ENCODE measurements at regions of chr5 and their contacts with region 1.

Region 1: DNA sequence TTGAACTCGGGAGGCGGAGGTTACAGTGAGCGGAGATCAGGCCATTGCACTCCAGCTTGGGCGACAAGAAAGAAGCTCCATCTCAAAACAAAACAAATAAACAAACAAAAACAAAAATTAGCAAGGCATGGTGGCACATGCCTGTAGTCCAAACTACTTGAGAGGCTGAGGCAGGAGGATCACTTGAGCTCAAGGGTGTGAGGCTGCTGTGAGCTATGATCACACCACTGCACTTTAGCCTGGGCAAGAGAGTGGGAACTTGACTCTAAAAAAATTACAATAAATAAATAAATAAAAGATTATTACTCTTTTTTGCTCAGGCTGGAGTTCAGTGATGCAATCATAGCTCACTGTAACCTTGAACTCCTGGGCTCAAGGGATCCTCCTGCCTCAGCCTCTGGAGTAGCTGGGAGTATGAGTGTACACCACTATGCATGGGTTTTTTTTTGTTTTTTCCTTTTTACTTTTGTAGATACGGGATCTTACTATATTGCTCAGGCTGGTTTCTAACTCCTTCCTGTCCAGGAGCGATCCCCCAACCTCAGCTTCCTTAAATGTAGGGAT is 9.0 kb upstream of the DCP2 start:
- DNase-seq: no peak

Region 2: DNA sequence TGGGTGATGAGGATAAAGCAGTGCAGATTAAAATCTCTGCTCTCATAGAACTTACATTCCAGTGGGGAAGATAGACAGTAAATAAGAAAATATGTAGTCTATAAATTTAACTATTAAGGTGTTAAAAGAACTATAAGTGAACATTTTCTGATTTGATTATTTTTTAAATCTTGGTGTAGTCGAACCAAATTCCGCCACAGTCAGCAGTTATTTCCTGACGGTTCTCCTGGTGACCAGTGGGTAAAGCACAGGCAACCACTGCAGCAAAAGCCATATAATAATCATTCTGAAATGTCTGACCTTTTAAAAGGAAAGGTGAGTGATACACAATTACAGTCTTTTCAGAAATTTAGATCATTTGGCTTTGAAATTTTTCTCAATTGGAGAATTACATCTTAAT is 36.2 kb after region 1 on chr5:
- intact Hi-C with region 1: loop called in 1 of 2 experiments (anchors 1 kb)
- DNase-seq: no peak

Measured in posterior vena cava (tissue), 2 donors.